Activated naive CD4-positive, alpha-beta T cell treated with anti-CD3 and anti-CD28 coated beads for 36 hours (primary cell): ENCODE measurements at regions of chr22 and their contacts with region 1.

Region 1: GRCh38 chr22:36481393-36482168 is at the start of gene TXN2:
- DNase-seq: peak; percentile 98
- H3K4me3 Mint-ChIP-seq: peak within 1 kb of the TSS; percentile 95
- H3K27ac Mint-ChIP-seq: peak within 1 kb of the TSS; percentile 89
- H3K4me1 Mint-ChIP-seq: peaks cover 13% of the 10 kb centered on the region
- H3K27me3 Mint-ChIP-seq: no peaks in the 10 kb centered on the region
- total RNA-seq, gene TXN2: 108 to 113 TPM

Region 2: GRCh38 chr22:36117053-36117554 is 364.5 kb before region 1 on chr22:
- CTCF ChIA-PET with region 1: no interaction called
- intact Hi-C with region 1: no loop called
- DNase-seq: no peak
- H3K4me3 Mint-ChIP-seq: no peak overlapping the region
- H3K27ac Mint-ChIP-seq: no peak overlapping the region
- H3K4me1 Mint-ChIP-seq: no peaks in the 10 kb centered on the region
- H3K27me3 Mint-ChIP-seq: no peaks in the 10 kb centered on the region

Region 3: GRCh38 chr22:36156515-36157419 is 324.8 kb before region 1 on chr22:
- CTCF ChIA-PET with region 1: no interaction called
- intact Hi-C with region 1: loop called (anchors 10 kb)
- DNase-seq: peak; percentile 92
- H3K4me3 Mint-ChIP-seq: peak overlapping the region; percentile 92
- H3K27ac Mint-ChIP-seq: peak overlapping the region; percentile 99
- H3K4me1 Mint-ChIP-seq: peaks cover 88% of the 10 kb centered on the region
- H3K27me3 Mint-ChIP-seq: no peaks in the 10 kb centered on the region

Region 4: GRCh38 chr22:36454916-36455570 is 26.5 kb before region 1 on chr22:
- CTCF ChIA-PET with region 1: interaction called, 3 read pairs
- intact Hi-C with region 1: loop called (anchors 1 kb)
- DNase-seq: peak; percentile 96
- H3K4me3 Mint-ChIP-seq: peak overlapping the region; percentile 76
- H3K27ac Mint-ChIP-seq: peak overlapping the region; percentile 75
- H3K4me1 Mint-ChIP-seq: peaks cover 37% of the 10 kb centered on the region
- H3K27me3 Mint-ChIP-seq: no peaks in the 10 kb centered on the region

Region 5: DNA sequence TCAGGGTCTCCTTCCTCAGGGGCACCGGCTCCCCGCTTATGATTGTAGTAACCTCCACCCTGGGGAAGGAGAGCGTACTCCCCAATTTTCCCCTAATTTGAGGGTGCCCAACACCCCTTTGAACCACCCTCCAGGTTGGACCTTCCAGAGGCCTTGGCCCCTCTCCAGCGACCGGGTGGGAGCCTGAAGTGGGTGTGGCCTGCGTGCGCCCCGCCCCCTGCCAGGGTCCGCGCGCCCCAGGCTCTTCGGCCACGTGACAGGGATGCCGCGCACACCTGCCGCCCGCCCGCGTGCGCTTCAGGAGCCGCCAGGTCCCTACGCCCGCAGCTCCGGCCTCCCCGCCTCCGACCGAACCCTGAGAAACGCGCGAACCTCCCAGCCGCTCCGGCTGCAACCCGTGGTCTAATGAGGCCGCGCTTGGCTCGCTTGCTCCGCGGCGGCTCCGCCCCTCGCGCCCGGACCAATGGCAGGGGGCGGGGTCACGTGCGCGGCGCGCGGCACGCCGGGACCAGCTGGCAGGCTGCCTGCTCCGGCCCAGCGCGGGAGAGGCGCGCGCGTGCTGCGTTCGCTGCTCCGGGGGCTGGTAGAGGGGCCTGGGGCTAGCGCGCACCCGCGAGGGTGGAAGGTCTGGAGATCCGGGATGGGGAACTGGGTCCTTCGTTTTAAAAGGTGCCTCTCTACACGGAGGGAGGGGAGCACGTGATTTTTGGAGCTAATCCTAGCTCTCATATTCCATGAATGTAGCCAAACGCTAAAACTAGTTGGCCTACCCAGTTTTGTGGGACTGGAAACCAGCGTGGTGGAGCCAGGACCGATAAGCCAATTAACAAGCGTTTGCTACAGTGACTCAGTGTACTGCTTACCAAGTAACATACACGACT is 25.3 kb after region 1 on chr22 and contains the start of gene FOXRED2:
- CTCF ChIA-PET with region 1: interaction called, 3 read pairs
- intact Hi-C with region 1: loop called (anchors 1 kb)
- DNase-seq: peak; percentile 89
- H3K4me3 Mint-ChIP-seq: peak within 1 kb of the TSS; percentile 72
- H3K27ac Mint-ChIP-seq: peak within 1 kb of the TSS; percentile 50
- H3K4me1 Mint-ChIP-seq: peaks cover 25% of the 10 kb centered on the region
- H3K27me3 Mint-ChIP-seq: no peaks in the 10 kb centered on the region
- total RNA-seq, gene FOXRED2: 10.6 to 11.9 TPM

Region 6: GRCh38 chr22:36522662-36523061 is 41.1 kb after region 1 on chr22:
- CTCF ChIA-PET with region 1: no interaction called
- intact Hi-C with region 1: no loop called
- DNase-seq: no peak
- H3K4me3 Mint-ChIP-seq: no peak overlapping the region
- H3K27ac Mint-ChIP-seq: no peak overlapping the region
- H3K4me1 Mint-ChIP-seq: peaks cover 29% of the 10 kb centered on the region
- H3K27me3 Mint-ChIP-seq: no peaks in the 10 kb centered on the region

Region 7: DNA sequence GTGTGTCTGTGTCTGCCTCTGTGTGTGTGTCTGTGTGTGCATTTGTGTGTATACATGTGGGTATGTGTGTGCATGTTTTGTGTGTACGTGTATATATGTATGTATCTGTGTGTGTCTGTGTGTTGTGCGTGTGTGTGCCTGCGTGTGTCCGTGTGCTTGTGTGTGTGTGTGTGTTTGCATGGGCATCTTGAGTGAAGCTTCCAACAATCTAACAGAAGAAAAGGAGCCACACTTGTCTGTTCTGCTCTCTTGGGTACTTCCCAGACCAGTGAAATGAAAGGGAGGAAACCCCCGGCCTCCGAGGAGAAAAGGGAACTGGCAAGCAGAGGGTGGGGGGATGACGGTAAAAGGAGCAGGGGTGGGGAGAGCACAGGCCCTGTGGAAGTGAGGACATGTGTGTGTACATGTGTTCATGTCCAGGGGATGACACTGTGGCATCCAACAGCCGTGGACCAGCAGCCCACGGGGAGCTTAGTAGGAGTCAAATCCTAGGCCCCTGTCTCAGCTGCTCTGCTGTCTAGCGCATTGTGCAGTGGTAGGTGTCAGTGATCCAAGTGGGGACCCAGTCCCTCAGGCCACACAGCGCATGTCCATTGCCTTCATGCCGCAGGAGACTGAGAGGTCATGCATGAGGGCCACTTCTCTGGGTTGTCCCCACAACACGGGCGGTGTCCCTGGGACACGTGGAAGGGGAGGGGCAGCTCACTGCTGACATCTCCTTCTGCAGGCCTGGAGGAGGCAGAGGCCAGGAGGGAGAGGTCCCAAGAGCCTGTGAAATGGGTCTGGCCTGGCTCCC is 439.9 kb after region 1 on chr22:
- CTCF ChIA-PET with region 1: no interaction called
- intact Hi-C with region 1: no loop called
- DNase-seq: peak; percentile 63
- H3K4me3 Mint-ChIP-seq: no peak overlapping the region
- H3K27ac Mint-ChIP-seq: no peak overlapping the region
- H3K4me1 Mint-ChIP-seq: peaks cover 4% of the 10 kb centered on the region
- H3K27me3 Mint-ChIP-seq: peaks cover 19% of the 10 kb centered on the region